BJ (cell line): ENCODE measurements at regions of chr17 and their contacts with region 1.

Region 1: DNA sequence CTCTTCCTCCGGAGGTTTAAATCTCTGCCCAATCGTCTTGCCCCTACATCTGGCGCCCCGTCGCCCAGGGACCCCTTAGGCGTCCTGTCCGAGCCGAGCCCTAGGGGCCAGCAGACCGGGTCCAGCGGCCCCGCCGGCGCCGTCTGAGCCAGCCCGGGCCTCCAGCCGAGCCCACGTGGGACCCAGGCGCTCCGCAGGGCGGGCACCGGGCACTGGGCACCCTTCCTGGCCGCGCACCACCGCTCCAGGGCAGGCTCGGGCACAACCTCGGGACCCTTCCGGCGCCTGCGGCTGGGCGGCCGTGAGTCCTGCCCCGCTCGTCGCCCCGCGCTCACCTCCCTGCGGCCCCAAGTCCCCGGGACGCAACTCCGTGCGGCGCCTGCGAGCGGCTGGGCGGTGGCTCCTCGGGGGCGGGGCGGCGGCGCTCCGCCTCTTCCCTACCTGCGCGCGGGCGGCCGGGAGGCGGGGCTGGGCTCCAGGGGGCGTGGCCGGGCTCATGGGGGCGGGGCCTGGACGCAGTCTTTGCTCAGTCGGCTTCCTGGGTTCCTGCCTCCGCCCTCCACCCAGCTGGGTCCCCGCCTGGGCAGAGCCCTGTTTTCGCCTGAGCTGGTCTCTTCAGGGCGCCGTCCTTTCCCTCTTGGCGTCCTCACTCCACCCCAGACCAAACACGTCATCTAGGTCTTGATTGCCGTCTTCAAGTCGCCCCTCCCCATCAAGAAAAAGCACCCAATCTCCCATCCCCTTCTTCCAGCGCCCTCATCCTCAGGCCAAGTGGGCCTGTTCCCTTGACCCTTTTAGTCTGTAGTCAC is at the start of gene RHBDF2:
- DNase-seq: no peak
- H3K4me3 ChIP-seq: peak within 1 kb of the TSS; percentile 52
- H3K27me3 ChIP-seq: no peaks in the 10 kb centered on the region
- CTCF ChIP-seq: no peak
- polyA plus RNA-seq, gene RHBDF2: 6.4 and 8.9 TPM in 2 replicates

Region 2: DNA sequence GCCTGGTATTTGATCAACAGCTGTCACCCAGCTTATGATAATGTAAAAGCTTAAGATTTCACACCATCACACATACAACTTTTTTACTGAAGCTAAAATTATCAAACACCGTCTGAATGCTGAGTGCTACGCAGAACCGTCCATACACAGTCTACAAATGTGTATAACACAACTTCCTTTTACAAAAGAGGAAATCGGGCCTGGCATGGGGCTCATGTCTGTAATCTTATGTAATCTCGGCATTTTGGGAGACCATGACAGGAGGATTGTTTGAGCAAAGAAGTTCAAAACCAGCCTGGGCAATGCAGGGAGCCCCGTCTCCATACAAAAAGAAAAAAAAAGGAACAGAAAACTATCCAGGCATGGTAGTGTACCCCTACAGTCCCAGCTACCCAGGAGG is 173.5 kb before region 1 on chr17:
- CTCF ChIA-PET with region 1: no interaction called
- POLR2A ChIA-PET with region 1: no interaction called
- DNase-seq: no peak
- H3K4me3 ChIP-seq: no peak overlapping the region
- H3K27me3 ChIP-seq: no peaks in the 10 kb centered on the region
- CTCF ChIP-seq: no peak

Region 3: GRCh38 chr17:76452660-76453430 is 48.4 kb before region 1 on chr17 and contains the start of gene UBE2O:
- CTCF ChIA-PET with region 1: interaction called, 442 read pairs
- POLR2A ChIA-PET with region 1: no interaction called
- DNase-seq: no peak
- H3K4me3 ChIP-seq: peak within 1 kb of the TSS; percentile 83
- H3K27me3 ChIP-seq: peaks cover 2% of the 10 kb centered on the region; the same call in 1 of the 2 replicates
- CTCF ChIP-seq: peak; percentile 59
- polyA plus RNA-seq, gene UBE2O: 7.0 and 11.1 TPM in 2 replicates

Region 4: DNA sequence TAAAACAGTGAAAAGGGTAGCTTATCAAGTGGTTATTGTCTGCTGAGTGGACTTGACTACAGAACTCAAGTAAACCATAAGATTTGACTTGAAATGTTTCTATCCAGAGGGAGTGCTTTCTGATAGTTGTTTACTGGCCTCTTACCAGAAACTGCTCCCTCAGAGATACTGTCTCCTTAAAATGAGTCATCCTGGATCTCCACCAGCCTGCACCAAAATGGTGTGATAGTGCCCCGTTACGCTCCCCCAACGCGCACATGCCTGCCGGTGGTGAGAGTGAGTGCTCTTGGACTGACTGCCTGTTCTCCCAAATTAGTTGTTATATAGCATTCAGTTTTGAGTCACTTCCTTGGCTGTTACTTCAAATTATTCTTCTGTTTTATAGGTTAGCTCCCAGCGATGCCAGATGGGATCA is 61.5 kb after region 1 on chr17:
- CTCF ChIA-PET with region 1: no interaction called
- POLR2A ChIA-PET with region 1: no interaction called
- DNase-seq: peak; percentile 87
- H3K4me3 ChIP-seq: no peak overlapping the region
- H3K27me3 ChIP-seq: no peaks in the 10 kb centered on the region
- CTCF ChIP-seq: no peak

Region 5: DNA sequence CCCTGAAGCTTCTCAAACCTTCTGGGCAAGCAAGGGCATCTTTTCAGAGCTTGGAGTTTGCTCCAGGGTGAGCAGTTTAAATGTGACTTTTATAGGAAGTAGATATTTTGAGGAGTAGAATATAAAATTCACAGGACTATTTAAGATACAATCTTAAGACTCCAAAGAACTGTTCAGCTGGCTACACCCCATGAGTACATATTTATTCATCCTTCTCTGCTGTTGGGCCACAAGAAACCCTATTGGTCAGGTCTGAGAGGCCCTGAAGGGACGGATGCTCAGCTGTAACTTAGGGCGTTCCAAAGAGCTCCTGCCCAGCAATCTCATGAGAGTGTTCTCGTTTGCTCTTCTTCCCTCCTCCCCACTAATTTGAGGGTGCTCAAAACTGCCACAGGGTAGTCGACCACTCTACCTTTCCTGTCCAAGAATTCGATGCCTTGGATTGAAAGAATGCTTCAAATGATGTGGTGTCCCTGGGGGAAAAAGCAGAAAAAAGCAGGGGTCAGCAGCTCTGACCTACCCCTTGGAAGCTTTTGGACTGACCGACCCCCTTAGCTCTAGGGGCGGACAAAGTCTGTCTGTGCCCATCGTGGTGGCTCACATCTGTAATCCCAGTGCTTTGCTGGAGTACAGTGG is 77.2 kb after region 1 on chr17:
- CTCF ChIA-PET with region 1: no interaction called
- POLR2A ChIA-PET with region 1: no interaction called
- DNase-seq: no peak
- H3K4me3 ChIP-seq: no peak overlapping the region
- H3K27me3 ChIP-seq: no peaks in the 10 kb centered on the region
- CTCF ChIP-seq: no peak